ENCODE measurements at regions of chr2 and their contacts with region 1.

Region 1: GRCh38 chr2:188381614-188382013 is 89.9 kb downstream of the GULP1 start:
- DNase-seq: no peak
- H3K4me3 ChIP-seq: no peak overlapping the region
- H3K27ac ChIP-seq: no peak overlapping the region
- H3K4me1 ChIP-seq: peaks cover 0 to 3% (median 1%) of the 10 kb centered on the region in 4 experiments; a peak in 2 of 7 replicates
- H3K27me3 ChIP-seq: no peaks in the 10 kb centered on the region
- CTCF ChIP-seq: no peak
- EP300 ChIP-seq: no peak
- POLR2A ChIP-seq: no peak
- RAD21 ChIP-seq: no peak

Region 2: DNA sequence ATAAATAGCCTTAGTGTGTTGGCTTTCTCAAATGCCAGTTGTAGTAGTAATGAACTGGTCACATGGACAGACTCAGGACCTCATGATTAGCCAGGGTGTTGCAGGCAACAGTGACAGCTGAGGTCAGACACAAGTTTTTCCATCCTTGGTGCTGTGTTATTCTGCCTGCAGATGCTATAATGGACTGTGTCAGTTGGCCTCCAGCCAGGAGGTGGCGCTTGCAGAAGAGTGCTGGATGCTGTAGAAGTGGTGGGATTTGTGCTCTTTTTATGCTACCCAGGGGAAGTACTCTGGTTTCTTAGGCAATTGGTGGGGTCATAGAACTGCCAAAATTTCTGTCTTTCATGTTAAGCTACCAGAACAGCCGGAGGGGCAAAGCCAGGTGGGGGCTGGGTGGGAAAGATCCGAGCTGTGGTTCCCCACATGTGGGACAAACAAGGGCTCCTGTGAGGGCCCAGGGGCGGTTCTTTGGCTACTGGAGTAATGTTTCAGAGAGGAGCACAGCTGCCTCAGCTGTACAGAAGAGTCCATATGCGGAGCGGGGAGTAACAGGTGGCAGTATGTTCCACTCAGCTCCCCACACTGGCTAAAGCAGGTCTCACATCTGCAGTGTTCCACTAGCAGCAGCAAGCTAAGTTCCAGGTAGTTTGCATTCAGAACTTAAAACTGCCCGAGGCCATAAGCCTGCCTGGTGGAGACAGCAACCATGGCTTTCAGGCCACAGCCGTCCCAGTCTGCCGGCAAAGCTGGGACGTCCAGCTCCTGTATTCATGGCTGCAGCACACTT is 14.5 kb after region 1 on chr2:
- CTCF ChIA-PET with region 1: interaction called, 20 read pairs
- POLR2A ChIA-PET with region 1: interaction called, 5 read pairs
- DNase-seq: no peak
- H3K4me3 ChIP-seq: no peak overlapping the region
- H3K27ac ChIP-seq: no peak overlapping the region
- H3K4me1 ChIP-seq: peaks cover 0 to 8% (median under 1%) of the 10 kb centered on the region in 4 experiments; a peak in 3 of 7 replicates
- H3K27me3 ChIP-seq: no peaks in the 10 kb centered on the region
- CTCF ChIP-seq: peak; percentile 41 to 72 (median 67)
- EP300 ChIP-seq: no peak
- POLR2A ChIP-seq: no peak
- RAD21 ChIP-seq: peak; percentile 27 to 54; a peak in 3 of 4 replicates

Region 3: GRCh38 chr2:188444106-188444835 is 62.7 kb after region 1 on chr2:
- CTCF ChIA-PET with region 1: no interaction called
- POLR2A ChIA-PET with region 1: no interaction called
- DNase-seq: no peak
- H3K4me3 ChIP-seq: no peak overlapping the region
- H3K27ac ChIP-seq: no peak overlapping the region
- H3K4me1 ChIP-seq: peaks cover 0 to 15% (median 2%) of the 10 kb centered on the region in 4 experiments; a peak in 3 of 7 replicates
- H3K27me3 ChIP-seq: no peaks in the 10 kb centered on the region
- CTCF ChIP-seq: no peak
- EP300 ChIP-seq: no peak
- POLR2A ChIP-seq: no peak
- RAD21 ChIP-seq: no peak